GM23248 (cell line): ENCODE measurements at regions of chr13 and their contacts with region 1.

Region 1: GRCh38 chr13:40682449-40683240 is 16.2 kb upstream of the FOXO1 start:
- DNase-seq: peak; percentile 73
- H3K4me3 ChIP-seq: no peak overlapping the region
- H3K27ac ChIP-seq: no peak overlapping the region
- H3K4me1 ChIP-seq: no peaks in the 10 kb centered on the region
- H3K27me3 ChIP-seq: no peaks in the 10 kb centered on the region; the same call in 1 of the 2 replicates

Region 2: GRCh38 chr13:39676315-39676876 is 1006.2 kb before region 1 on chr13:
- in situ Hi-C with region 1: loop called (anchors 25 kb)
- DNase-seq: peak; percentile 66
- H3K4me3 ChIP-seq: no peak overlapping the region
- H3K27ac ChIP-seq: no peak overlapping the region
- H3K4me1 ChIP-seq: peaks cover 3% of the 10 kb centered on the region
- H3K27me3 ChIP-seq: no peaks in the 10 kb centered on the region

Region 3: DNA sequence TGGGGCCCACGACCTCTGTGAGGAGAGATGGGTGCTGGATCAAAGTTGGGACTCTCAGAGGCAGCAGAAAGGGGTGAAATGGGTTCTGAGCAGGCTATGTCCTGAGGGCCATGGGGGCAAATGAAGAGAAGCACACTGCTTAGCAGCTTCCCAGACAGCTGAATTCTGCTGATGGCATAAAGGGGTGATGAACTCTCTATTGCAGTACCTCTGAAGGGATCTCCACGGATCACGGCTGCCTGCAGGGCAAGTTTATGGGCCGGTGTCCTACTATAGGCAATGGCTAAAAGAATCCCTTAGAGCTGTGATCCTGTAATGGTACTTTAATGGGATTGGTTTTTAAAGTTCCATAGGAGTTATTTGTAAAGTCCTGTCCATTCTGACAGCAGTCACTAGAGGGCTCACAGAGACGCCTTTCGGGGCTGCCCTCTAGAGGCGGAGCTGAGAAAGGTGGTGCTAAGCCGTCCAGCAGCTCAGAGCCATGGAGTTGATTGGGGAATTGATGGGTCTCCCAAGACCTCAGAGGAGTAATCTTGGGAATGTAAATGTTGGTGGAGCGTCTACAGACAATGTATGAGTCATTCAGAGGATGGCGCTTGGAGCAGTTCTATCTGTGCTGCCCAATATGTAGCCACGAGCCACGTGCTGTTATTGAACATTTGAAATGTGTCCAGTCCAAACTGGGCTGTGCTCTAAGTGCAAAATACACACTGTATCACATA is 739.9 kb before region 1 on chr13:
- in situ Hi-C with region 1: loop called (anchors 10 kb)
- DNase-seq: peak; percentile 89
- H3K4me3 ChIP-seq: no peak overlapping the region
- H3K27ac ChIP-seq: no peak overlapping the region
- H3K4me1 ChIP-seq: no peaks in the 10 kb centered on the region
- H3K27me3 ChIP-seq: peaks cover 15% of the 10 kb centered on the region